ENCODE measurements at regions of chr1 and their contacts with region 1.

Region 1: DNA sequence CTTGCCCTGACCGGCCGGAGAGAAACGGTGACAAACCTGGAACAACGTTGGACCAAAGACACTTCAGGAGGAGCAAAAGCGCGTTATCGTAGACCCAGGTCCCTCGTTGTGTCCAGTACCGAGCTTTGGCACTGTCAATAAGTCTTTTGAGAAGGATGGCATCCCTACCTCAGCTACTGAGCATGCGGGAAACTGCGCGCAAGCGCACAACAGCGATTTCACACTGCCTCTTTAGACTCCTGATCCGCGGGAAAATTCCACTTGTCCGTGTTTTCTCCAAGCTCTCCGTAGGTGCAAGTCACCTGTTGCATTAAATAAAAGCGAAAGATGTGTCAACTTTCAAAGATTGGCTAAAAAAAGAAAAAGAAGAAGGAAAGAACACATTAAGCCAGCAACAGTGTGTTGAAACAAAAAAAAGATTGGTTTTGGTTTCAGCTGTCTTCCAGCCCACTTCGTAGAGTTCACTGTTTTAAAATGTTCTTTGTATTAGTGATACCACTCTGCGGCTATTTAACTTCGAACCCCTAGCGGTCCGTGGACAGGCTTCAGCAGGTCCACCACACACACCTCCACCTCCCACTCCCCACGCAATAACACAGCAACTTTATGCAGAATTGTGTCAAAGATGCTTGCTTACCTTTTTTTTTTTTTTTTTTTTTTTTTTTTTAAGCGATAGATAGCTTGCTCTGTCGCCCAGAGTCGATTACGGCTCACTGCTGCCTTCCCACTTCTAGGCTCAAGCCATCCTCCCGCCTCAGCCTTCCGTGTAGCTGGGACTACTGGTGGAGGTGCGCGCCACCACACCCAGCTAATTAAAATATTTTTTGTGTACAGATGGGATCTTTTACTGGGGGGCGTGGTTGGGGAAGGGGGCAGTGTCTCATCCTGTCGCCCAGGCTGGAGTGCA is at the start of gene BPNT1:
- DNase-seq: peak; percentile 97 to 99 (median 98)
- H3K4me3 ChIP-seq: peak within 1 kb of the TSS; percentile 66 to 70
- H3K4me3 Mint-ChIP-seq: peak within 1 kb of the TSS; percentile 95 to 99 (median 98)
- H3K27ac ChIP-seq: peak within 1 kb of the TSS; percentile 40
- H3K27ac Mint-ChIP-seq: peak within 1 kb of the TSS; percentile 85 to 97 (median 91)
- H3K4me1 ChIP-seq: peaks cover 16% of the 10 kb centered on the region
- H3K4me1 Mint-ChIP-seq: peaks cover 9 to 25% (median 16%) of the 10 kb centered on the region in 4 donors
- H3K27me3 ChIP-seq: no peaks in the 10 kb centered on the region
- H3K27me3 Mint-ChIP-seq: no peaks in the 10 kb centered on the region
- total RNA-seq, gene BPNT1: 11.4 to 14.1 TPM

Region 2: GRCh38 chr1:218284934-218285635 is 1804.8 kb before region 1 on chr1 and contains the start of gene RRP15:
- CTCF ChIA-PET with region 1: no interaction called
- POLR2A ChIA-PET with region 1: no interaction called
- intact Hi-C with region 1: loop called (anchors 10 kb)
- DNase-seq: peak; percentile 81 to 86 (median 82)
- H3K4me3 ChIP-seq: peak within 1 kb of the TSS; percentile 81 to 93
- H3K4me3 Mint-ChIP-seq: peak within 1 kb of the TSS; percentile 93 to 100 (median 98)
- H3K27ac ChIP-seq: peak within 1 kb of the TSS; percentile 60
- H3K27ac Mint-ChIP-seq: peak within 1 kb of the TSS; percentile 91 to 99 (median 96)
- H3K4me1 ChIP-seq: peaks cover 24% of the 10 kb centered on the region
- H3K4me1 Mint-ChIP-seq: peaks cover 17 to 41% (median 27%) of the 10 kb centered on the region in 4 donors
- H3K27me3 ChIP-seq: no peaks in the 10 kb centered on the region
- H3K27me3 Mint-ChIP-seq: peaks cover 5 to 7% of the 10 kb centered on the region in 2 donors
- total RNA-seq, gene RRP15: 14.1 to 16.8 TPM

Region 3: DNA sequence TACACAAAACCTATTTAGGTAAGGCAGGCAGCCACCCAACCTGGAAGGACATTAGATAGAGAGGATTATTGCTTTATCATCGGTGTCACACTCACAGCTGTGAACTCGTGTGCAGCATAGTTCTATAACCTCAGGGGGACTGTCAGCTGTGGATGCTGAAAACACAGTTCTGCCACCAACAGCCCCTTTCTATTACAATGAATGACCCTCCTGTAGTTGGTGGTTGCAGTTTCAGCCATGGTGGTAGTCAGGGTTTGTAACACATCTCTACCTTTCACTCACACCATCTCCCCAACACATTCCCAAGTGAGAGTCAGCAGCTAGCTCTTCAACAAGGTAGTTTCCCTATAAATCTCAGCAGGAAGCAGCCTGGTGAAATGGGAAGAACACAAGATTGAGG is 613.8 kb before region 1 on chr1:
- CTCF ChIA-PET with region 1: no interaction called
- POLR2A ChIA-PET with region 1: no interaction called
- intact Hi-C with region 1: no loop called
- DNase-seq: no peak
- H3K4me3 ChIP-seq: no peak overlapping the region
- H3K4me3 Mint-ChIP-seq: no peak overlapping the region
- H3K27ac ChIP-seq: no peak overlapping the region
- H3K27ac Mint-ChIP-seq: no peak overlapping the region
- H3K4me1 ChIP-seq: no peaks in the 10 kb centered on the region
- H3K4me1 Mint-ChIP-seq: no peaks in the 10 kb centered on the region
- H3K27me3 ChIP-seq: no peaks in the 10 kb centered on the region
- H3K27me3 Mint-ChIP-seq: no peaks in the 10 kb centered on the region

Region 4: GRCh38 chr1:219990782-219991510 is 99.0 kb before region 1 on chr1:
- CTCF ChIA-PET with region 1: no interaction called
- POLR2A ChIA-PET with region 1: no interaction called
- intact Hi-C with region 1: loop called (anchors 10 kb)
- DNase-seq: peak in 3 of 5 donors; percentile 1 to 9 (median 2)
- H3K4me3 ChIP-seq: no peak overlapping the region
- H3K4me3 Mint-ChIP-seq: no peak overlapping the region
- H3K27ac ChIP-seq: no peak overlapping the region
- H3K27ac Mint-ChIP-seq: peak overlapping the region in 2 of 7 donors; percentile 29 to 56
- H3K4me1 ChIP-seq: no peaks in the 10 kb centered on the region
- H3K4me1 Mint-ChIP-seq: peaks cover 0 to 3% (median under 1%) of the 10 kb centered on the region in 4 donors
- H3K27me3 ChIP-seq: no peaks in the 10 kb centered on the region
- H3K27me3 Mint-ChIP-seq: no peaks in the 10 kb centered on the region

Region 5: DNA sequence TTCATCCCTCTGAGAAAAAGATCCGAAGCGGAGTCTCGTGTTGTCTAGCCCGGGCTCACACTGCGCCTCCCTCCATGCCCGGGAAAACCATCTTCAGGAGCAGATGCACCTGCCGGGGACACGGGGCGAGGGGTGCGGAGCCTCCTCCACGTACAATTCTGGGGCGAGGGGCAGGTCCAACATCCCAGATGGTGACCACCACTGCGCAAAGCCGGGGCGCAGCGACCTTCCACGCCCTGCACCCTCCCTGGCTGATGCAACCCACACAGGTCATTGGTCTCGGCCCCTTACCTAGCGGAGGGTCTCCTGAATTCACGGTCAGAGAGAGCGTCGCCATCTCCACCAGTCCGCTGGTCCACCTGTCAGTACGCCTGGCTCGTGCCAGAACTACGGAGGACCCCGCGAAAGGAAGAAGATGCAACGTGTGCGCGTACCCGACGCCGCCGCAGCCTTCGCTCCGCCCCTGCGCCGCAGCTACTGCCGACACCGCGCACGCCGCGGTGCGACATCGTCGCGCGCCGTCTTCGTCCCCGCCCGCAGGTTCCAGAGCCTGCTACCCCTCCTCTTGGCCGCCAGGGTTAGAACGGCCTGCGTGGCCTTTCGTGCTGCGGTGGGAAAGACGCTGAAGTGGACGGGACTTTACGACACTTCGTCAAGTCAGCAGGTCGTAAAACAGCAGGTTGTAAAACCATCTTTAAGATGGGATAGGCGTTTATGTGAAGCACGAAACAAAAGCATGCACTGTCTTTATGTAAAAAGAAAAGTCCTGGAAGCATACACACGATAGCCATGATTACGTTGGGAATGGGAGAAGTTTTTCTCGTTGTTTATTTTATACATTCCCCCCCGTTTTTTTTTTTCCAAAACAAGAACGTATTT is 43.6 kb before region 1 on chr1 and contains the start of gene EPRS1:
- CTCF ChIA-PET with region 1: interaction called, 5 read pairs
- POLR2A ChIA-PET with region 1: interaction called, 10 read pairs
- intact Hi-C with region 1: loop called (anchors 1 kb)
- DNase-seq: peak; percentile 95 to 97 (median 96)
- H3K4me3 ChIP-seq: peak within 1 kb of the TSS; percentile 78 to 90
- H3K4me3 Mint-ChIP-seq: peak within 1 kb of the TSS; percentile 91 to 99 (median 94)
- H3K27ac ChIP-seq: peak within 1 kb of the TSS; percentile 91
- H3K27ac Mint-ChIP-seq: peak within 1 kb of the TSS; percentile 93 to 98 (median 96)
- H3K4me1 ChIP-seq: peaks cover 31% of the 10 kb centered on the region
- H3K4me1 Mint-ChIP-seq: peaks cover 25 to 53% (median 33%) of the 10 kb centered on the region in 4 donors
- H3K27me3 ChIP-seq: no peaks in the 10 kb centered on the region
- H3K27me3 Mint-ChIP-seq: no peaks in the 10 kb centered on the region
- total RNA-seq, gene EPRS1: 98.7 to 116 TPM

Region 6: DNA sequence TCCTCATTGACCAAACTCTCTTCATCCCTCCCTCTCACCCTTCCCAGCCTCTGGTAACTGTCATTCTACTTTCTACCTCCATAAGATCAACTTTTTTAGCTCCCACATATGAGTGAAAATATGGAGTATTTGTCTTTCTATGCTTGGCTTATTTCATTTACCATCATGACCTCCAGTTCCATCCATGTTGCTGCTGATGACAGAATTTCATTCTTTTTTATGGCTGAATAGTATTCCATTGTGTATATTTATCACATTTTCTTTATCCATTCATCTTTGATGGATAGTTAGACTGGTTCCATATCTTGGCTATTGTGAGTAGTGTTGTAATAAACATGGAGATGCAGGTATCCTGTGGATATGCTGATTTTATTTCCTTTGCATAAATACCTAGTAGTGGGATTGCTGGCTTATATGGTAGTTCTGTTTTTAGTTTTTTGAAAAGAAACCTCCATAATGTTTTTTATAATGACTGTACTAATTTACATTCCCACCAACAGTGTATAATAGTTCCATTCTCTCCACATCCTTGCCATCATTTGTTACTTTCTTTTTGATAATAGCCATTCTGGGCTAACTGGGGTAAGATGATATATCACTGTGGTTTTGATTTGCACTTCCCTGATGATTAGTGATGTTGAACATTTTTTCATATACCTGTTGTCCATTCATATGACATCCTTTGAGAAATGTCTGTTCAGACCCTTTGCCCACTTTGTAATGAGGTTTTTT is 39.7 kb after region 1 on chr1:
- CTCF ChIA-PET with region 1: no interaction called
- POLR2A ChIA-PET with region 1: no interaction called
- intact Hi-C with region 1: no loop called
- DNase-seq: no peak
- H3K4me3 ChIP-seq: no peak overlapping the region
- H3K4me3 Mint-ChIP-seq: no peak overlapping the region
- H3K27ac ChIP-seq: no peak overlapping the region
- H3K27ac Mint-ChIP-seq: peak overlapping the region in 1 of 7 donors; percentile 14
- H3K4me1 ChIP-seq: no peaks in the 10 kb centered on the region
- H3K4me1 Mint-ChIP-seq: peaks cover 6 to 8% (median 6%) of the 10 kb centered on the region in 4 donors
- H3K27me3 ChIP-seq: no peaks in the 10 kb centered on the region
- H3K27me3 Mint-ChIP-seq: no peaks in the 10 kb centered on the region

Region 7: DNA sequence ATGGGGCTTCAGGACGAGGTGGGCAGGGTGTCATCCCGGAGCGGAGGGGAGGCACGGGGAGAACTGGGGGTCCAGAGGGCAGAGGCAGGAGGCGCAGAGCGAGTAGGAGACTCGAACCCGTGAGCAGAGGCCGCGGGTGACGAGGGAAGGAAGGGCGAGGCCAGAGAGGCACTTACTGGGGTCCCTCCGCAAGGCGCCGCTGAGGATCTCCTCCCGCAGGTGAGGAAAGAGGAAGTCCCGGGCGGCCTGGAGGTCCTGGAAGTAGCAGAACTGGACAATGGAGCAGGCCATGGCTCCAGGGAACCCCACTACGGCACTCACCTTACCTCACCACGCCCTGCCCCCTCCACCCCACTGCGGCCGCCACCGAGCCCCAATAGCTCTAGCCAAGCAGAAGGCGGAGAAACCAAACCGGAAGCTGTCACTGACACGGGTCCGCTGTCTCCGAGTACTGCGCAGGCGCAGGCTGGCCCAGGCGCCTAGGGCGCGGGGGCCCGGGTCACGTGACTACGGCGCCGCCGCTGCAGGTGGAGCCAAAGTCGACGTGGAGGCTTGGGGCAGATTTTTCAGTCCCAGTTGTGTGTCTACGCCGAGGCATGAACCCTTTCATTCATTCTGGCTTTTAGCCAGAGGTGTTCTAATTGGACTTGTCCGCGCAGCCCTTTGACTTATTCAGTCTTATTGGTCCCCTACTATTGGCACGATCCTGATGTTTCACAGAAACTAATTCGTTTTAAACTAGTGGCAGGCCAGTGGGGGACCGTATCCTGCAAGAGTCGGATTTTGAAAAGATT is 182.3 kb after region 1 on chr1 and contains the start of gene RAB3GAP2:
- CTCF ChIA-PET with region 1: no interaction called
- POLR2A ChIA-PET with region 1: no interaction called
- intact Hi-C with region 1: loop called (anchors 1 kb)
- DNase-seq: peak; percentile 97 to 98 (median 97)
- H3K4me3 ChIP-seq: peak within 1 kb of the TSS; percentile 84 to 96
- H3K4me3 Mint-ChIP-seq: no peak within 1 kb of the TSS
- H3K27ac ChIP-seq: peak within 1 kb of the TSS; percentile 95
- H3K27ac Mint-ChIP-seq: no peak within 1 kb of the TSS
- H3K4me1 ChIP-seq: peaks cover 38% of the 10 kb centered on the region
- H3K4me1 Mint-ChIP-seq: peaks cover 11 to 15% (median 13%) of the 10 kb centered on the region in 4 donors
- H3K27me3 ChIP-seq: no peaks in the 10 kb centered on the region
- H3K27me3 Mint-ChIP-seq: peaks cover 3 to 6% of the 10 kb centered on the region in 2 donors
- total RNA-seq, gene RAB3GAP2: 44.4 to 44.9 TPM